ENCODE measurements at regions of chr6 and their contacts with region 1.

Region 1: GRCh38 chr6:2738373-2738979 is 12.2 kb downstream of the MYLK4 start:
- DNase-seq: peak; percentile 41
- ATAC-seq: peak; percentile 85
- H3K4me3 ChIP-seq: no peak overlapping the region
- H3K27ac ChIP-seq: no peak overlapping the region
- H3K4me1 ChIP-seq: peaks cover 0 to 6% of the 10 kb centered on the region in 2 experiments; a peak in 1 of 4 replicates
- H3K27me3 ChIP-seq: no peaks in the 10 kb centered on the region
- CTCF ChIP-seq: peak; percentile 57 to 82 (median 73); a peak in 5 of 6 replicates
- POLR2A ChIP-seq: no peak
- RAD21 ChIP-seq: peak; percentile 93

Region 2: GRCh38 chr6:2749969-2750600 is 11.6 kb after region 1 on chr6:
- CTCF ChIA-PET with region 1: interaction called, 21 read pairs
- POLR2A ChIA-PET with region 1: no interaction called
- RAD21 ChIA-PET with region 1: interaction called in 1 of 2 experiments, 3 read pairs
- intact Hi-C with region 1: no loop called
- DNase-seq: peak; percentile 43
- ATAC-seq: peak; percentile 84
- H3K4me3 ChIP-seq: 0 out of 4 replicates have a peak overlapping the region, but pooled peaks of 1 of the 2 experiments have one; percentile 15
- H3K27ac ChIP-seq: no peak overlapping the region
- H3K4me1 ChIP-seq: peaks cover 0 to 9% of the 10 kb centered on the region in 2 experiments; a peak in 2 of 4 replicates
- H3K27me3 ChIP-seq: no peaks in the 10 kb centered on the region
- CTCF ChIP-seq: peak; percentile 63 to 82 (median 79)
- POLR2A ChIP-seq: no peak
- RAD21 ChIP-seq: peak; percentile 61

Region 3: DNA sequence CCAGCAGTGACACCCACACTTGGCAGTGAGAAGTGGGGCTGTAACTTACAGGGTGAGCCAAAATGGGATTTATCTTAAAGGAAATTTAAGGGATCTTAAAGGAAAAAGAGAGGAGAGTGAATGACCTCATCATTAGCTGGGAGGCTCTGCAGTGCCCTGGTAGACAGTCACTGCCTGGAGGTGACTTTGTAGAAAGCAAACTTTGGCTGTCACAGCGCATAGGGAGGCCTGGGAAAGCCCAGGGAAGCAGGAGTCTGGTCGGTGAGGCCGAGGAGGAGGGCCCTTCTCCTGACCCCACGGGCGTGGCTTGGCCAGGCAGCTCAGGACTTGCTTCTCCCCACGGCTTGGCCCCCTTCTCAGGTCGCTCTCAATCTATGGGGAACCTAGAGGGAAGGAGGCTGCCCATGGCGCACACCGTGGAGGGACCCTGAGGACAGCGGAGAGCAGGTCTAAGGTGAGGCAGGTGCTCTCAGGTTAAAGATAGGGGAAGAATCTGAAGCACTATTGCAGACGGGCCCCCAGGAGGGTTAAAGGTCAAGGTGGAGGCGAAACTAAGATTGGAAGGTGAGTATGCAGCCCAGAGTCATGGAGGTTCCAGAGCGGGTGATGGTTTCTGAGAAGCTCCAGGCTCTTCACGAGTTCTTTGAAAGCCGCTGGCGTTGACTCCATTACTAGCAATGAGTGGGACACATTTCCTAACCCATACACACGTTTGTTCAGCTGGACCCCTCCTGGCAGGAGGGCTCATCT is 314.2 kb after region 1 on chr6:
- CTCF ChIA-PET with region 1: interaction called, 5 read pairs
- POLR2A ChIA-PET with region 1: no interaction called
- RAD21 ChIA-PET with region 1: no interaction called
- intact Hi-C with region 1: loop called (anchors 5 kb)
- DNase-seq: no peak
- ATAC-seq: no peak
- H3K4me3 ChIP-seq: peak overlapping the region; percentile 57 to 63
- H3K27ac ChIP-seq: no peak overlapping the region
- H3K4me1 ChIP-seq: peaks cover 10 to 24% of the 10 kb centered on the region in 2 experiments; a peak in 2 of 4 replicates
- H3K27me3 ChIP-seq: no peaks in the 10 kb centered on the region
- CTCF ChIP-seq: no peak
- POLR2A ChIP-seq: no peak
- RAD21 ChIP-seq: no peak